ENCODE measurements at regions of chr6 and their contacts with region 1.

Region 1: GRCh38 chr6:151585741-151586140 is 91.9 kb downstream of the CCDC170 start:
- DNase-seq: no peak
- H3K4me3 ChIP-seq: no peak overlapping the region
- H3K27ac ChIP-seq: no peak overlapping the region
- H3K4me1 ChIP-seq: no peaks in the 10 kb centered on the region
- H3K27me3 ChIP-seq: no peaks in the 10 kb centered on the region
- CTCF ChIP-seq: no peak
- POLR2A ChIP-seq: no peak

Region 2: GRCh38 chr6:150153542-150153876 is 1432.2 kb before region 1 on chr6:
- intact Hi-C with region 1: no loop called
- DNase-seq: no peak
- H3K4me3 ChIP-seq: no peak overlapping the region
- H3K27ac ChIP-seq: no peak overlapping the region
- H3K4me1 ChIP-seq: no peaks in the 10 kb centered on the region
- H3K27me3 ChIP-seq: peaks cover 0 to 13% of the 10 kb centered on the region in 2 donors
- CTCF ChIP-seq: no peak
- POLR2A ChIP-seq: no peak

Region 3: DNA sequence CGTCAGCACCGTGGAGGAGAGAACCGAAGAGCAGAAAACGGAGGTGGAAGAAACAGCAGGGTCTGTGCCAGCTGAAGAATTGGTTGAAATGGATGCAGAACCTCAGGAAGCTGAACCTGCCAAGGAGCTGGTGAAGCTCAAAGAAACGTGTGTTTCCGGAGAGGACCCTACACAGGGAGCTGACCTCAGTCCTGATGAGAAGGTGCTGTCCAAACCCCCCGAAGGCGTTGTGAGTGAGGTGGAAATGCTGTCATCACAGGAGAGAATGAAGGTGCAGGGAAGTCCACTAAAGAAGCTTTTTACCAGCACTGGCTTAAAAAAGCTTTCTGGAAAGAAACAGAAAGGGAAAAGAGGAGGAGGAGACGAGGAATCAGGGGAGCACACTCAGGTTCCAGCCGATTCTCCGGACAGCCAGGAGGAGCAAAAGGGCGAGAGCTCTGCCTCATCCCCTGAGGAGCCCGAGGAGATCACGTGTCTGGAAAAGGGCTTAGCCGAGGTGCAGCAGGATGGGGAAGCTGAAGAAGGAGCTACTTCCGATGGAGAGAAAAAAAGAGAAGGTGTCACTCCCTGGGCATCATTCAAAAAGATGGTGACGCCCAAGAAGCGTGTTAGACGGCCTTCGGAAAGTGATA is 236.0 kb before region 1 on chr6:
- intact Hi-C with region 1: no loop called
- DNase-seq: no peak
- H3K4me3 ChIP-seq: no peak overlapping the region
- H3K27ac ChIP-seq: no peak overlapping the region
- H3K4me1 ChIP-seq: no peaks in the 10 kb centered on the region
- H3K27me3 ChIP-seq: no peaks in the 10 kb centered on the region
- CTCF ChIP-seq: no peak
- POLR2A ChIP-seq: no peak

Region 4: DNA sequence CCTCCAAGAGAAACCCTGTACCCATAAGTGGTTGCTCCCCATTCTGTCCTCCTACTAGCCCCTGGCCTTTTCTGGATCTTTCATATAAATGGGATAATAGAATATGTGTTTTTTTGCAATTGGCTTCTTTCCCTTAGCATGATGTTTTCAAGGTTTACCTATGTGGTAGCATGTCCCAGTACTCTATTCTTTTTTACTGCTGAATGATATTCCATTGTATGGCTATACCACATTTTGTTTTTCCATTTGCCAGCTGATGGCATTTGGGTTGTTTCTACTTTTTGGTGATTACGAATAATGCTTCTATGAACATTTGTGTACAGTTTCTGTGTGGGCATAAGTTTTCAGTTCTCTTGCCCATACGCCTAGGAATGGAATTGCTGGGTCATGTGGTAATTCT is 27.7 kb after region 1 on chr6:
- intact Hi-C with region 1: loop called (anchors 2 kb)
- DNase-seq: no peak
- H3K4me3 ChIP-seq: no peak overlapping the region
- H3K27ac ChIP-seq: no peak overlapping the region
- H3K4me1 ChIP-seq: no peaks in the 10 kb centered on the region
- H3K27me3 ChIP-seq: no peaks in the 10 kb centered on the region
- CTCF ChIP-seq: no peak
- POLR2A ChIP-seq: no peak